ENCODE measurements at regions of chr3 and their contacts with region 1.

Region 1: GRCh38 chr3:153246806-153247205 is 84.8 kb downstream of the RAP2B start:
- DNase-seq: no peak
- ATAC-seq: no peak
- H3K4me3 ChIP-seq: no peak overlapping the region
- H3K4me3 Mint-ChIP-seq: no peak overlapping the region
- H3K27ac ChIP-seq: no peak overlapping the region
- H3K27ac Mint-ChIP-seq: no peak overlapping the region
- H3K4me1 ChIP-seq: peaks cover 11% of the 10 kb centered on the region
- H3K4me1 Mint-ChIP-seq: peaks cover 46% of the 10 kb centered on the region
- H3K27me3 ChIP-seq: no peaks in the 10 kb centered on the region
- H3K27me3 Mint-ChIP-seq: no peaks in the 10 kb centered on the region
- CTCF ChIP-seq: no peak

Region 2: GRCh38 chr3:153192327-153192726 is 54.5 kb before region 1 on chr3:
- CTCF ChIA-PET with region 1: no interaction called
- POLR2A ChIA-PET with region 1: no interaction called
- intact Hi-C with region 1: no loop called
- DNase-seq: no peak
- ATAC-seq: no peak
- H3K4me3 ChIP-seq: no peak overlapping the region
- H3K4me3 Mint-ChIP-seq: no peak overlapping the region
- H3K27ac ChIP-seq: no peak overlapping the region
- H3K27ac Mint-ChIP-seq: no peak overlapping the region
- H3K4me1 ChIP-seq: no peaks in the 10 kb centered on the region
- H3K4me1 Mint-ChIP-seq: peaks cover 2% of the 10 kb centered on the region
- H3K27me3 ChIP-seq: no peaks in the 10 kb centered on the region
- H3K27me3 Mint-ChIP-seq: no peaks in the 10 kb centered on the region
- CTCF ChIP-seq: no peak

Region 3: GRCh38 chr3:153209596-153209995 is 37.2 kb before region 1 on chr3:
- CTCF ChIA-PET with region 1: no interaction called
- POLR2A ChIA-PET with region 1: no interaction called
- intact Hi-C with region 1: loop called (anchors 5 kb)
- DNase-seq: peak in 1 of 9 experiments; percentile 43
- ATAC-seq: no peak
- H3K4me3 ChIP-seq: no peak overlapping the region
- H3K4me3 Mint-ChIP-seq: peak overlapping the region; percentile 50
- H3K27ac ChIP-seq: no peak overlapping the region
- H3K27ac Mint-ChIP-seq: no peak overlapping the region
- H3K4me1 ChIP-seq: peaks cover 13% of the 10 kb centered on the region
- H3K4me1 Mint-ChIP-seq: peaks cover 36% of the 10 kb centered on the region
- H3K27me3 ChIP-seq: no peaks in the 10 kb centered on the region
- H3K27me3 Mint-ChIP-seq: no peaks in the 10 kb centered on the region
- CTCF ChIP-seq: no peak

Region 4: GRCh38 chr3:153277029-153277428 is 30.2 kb after region 1 on chr3:
- CTCF ChIA-PET with region 1: no interaction called
- POLR2A ChIA-PET with region 1: no interaction called
- intact Hi-C with region 1: loop called in 1 of 2 experiments (anchors 5 kb)
- DNase-seq: no peak
- ATAC-seq: no peak
- H3K4me3 ChIP-seq: no peak overlapping the region
- H3K4me3 Mint-ChIP-seq: no peak overlapping the region
- H3K27ac ChIP-seq: no peak overlapping the region
- H3K27ac Mint-ChIP-seq: no peak overlapping the region
- H3K4me1 ChIP-seq: no peaks in the 10 kb centered on the region
- H3K4me1 Mint-ChIP-seq: peaks cover 13% of the 10 kb centered on the region
- H3K27me3 ChIP-seq: no peaks in the 10 kb centered on the region
- H3K27me3 Mint-ChIP-seq: no peaks in the 10 kb centered on the region
- CTCF ChIP-seq: no peak

Measured in CD8-positive, alpha-beta T cell (primary cell).